Panc1 (cell line): ENCODE measurements at regions of chr13 and their contacts with region 1.

Region 1: DNA sequence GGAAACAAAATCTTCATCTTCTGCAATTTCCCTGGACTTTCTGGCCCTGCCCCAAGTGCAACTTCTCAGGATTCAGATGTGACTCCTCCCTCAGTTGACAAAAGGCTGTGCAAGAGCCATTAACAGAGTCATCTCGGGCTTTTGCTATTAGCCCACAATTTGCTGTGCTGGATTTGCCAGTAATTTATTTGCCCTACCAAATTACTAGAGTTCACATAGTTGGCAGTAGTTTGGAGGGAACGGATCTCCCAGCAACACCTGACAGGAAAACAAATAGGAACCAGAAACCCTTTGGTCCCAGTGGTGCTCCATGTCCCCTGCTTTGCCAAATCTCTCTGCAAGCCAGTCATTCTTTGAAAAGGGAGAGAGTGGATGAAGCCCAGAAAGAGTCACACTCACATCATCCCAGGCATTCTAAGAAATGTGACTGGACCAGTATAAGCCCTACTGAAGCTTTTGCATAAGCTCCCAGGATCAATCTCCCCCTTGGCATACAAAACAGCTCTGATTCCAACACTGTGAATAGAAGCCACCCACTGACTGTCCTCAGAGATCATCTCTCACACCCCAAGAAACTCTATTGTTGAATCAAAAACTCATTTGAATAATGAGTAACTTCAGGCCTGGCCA is 350.1 kb upstream of the NBEA start:
- DNase-seq: no peak
- ATAC-seq: no peak
- H3K4me3 ChIP-seq: no peak overlapping the region
- H3K27ac ChIP-seq: no peak overlapping the region
- H3K4me1 ChIP-seq: no peaks in the 10 kb centered on the region
- H3K27me3 ChIP-seq: no peaks in the 10 kb centered on the region
- CTCF ChIP-seq: no peak

Region 2: GRCh38 chr13:34617473-34618083 is 25.6 kb after region 1 on chr13:
- CTCF ChIA-PET with region 1: no interaction called
- POLR2A ChIA-PET with region 1: no interaction called
- in situ Hi-C with region 1: no loop called
- intact Hi-C with region 1: loop called (anchors 2 kb)
- DNase-seq: no peak
- ATAC-seq: no peak
- H3K4me3 ChIP-seq: no peak overlapping the region
- H3K27ac ChIP-seq: no peak overlapping the region
- H3K4me1 ChIP-seq: no peaks in the 10 kb centered on the region
- H3K27me3 ChIP-seq: no peaks in the 10 kb centered on the region
- CTCF ChIP-seq: no peak